Aorta (tissue), 5 donors: ENCODE measurements at regions of chr17 and their contacts with region 1.

Region 1: GRCh38 chr17:4420692-4421131 is 13.0 kb upstream of the SPNS3 start:
- DNase-seq: peak in 1 of 2 donors; percentile 64
- ATAC-seq: peak; percentile 84
- H3K4me3 ChIP-seq: no peak overlapping the region
- H3K27ac ChIP-seq: no peak overlapping the region
- H3K4me1 ChIP-seq: no peaks in the 10 kb centered on the region
- H3K27me3 ChIP-seq: no peaks in the 10 kb centered on the region

Region 2: DNA sequence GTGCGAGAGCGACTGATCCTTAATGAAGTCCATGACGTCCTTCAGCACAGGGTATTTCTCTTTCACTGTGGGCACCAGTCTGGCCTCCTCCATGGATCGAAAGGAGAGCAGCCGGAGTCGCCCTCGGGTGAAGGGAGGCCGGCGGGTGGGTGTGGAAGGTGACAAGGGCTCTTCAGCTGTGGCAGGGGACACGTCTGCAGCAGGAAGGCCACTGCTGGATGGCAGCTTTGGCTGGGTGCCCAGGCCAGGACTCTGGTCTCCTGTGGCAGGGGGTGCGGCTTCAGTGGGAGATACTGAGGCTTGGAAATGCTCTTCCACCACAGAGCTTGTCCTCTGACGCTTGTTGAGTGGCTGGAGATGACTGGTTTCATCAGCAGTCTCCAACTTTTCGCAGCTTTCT is 356.3 kb before region 1 on chr17:
- intact Hi-C with region 1: no loop called
- DNase-seq: no peak
- ATAC-seq: no peak
- H3K4me3 ChIP-seq: no peak overlapping the region
- H3K27ac ChIP-seq: no peak overlapping the region
- H3K4me1 ChIP-seq: no peaks in the 10 kb centered on the region
- H3K27me3 ChIP-seq: no peaks in the 10 kb centered on the region

Region 3: GRCh38 chr17:4541328-4542002 is 120.8 kb after region 1 on chr17:
- intact Hi-C with region 1: no loop called
- DNase-seq: peak in 1 of 2 donors; percentile 76
- ATAC-seq: no peak
- H3K4me3 ChIP-seq: no peak overlapping the region
- H3K27ac ChIP-seq: no peak overlapping the region
- H3K4me1 ChIP-seq: no peaks in the 10 kb centered on the region
- H3K27me3 ChIP-seq: no peaks in the 10 kb centered on the region

Region 4: GRCh38 chr17:4565209-4566141 is 144.8 kb after region 1 on chr17:
- intact Hi-C with region 1: loop called in 1 of 2 experiments (anchors 10 kb)
- DNase-seq: peak in 1 of 2 donors; percentile 74
- ATAC-seq: peak; percentile 89
- H3K4me3 ChIP-seq: no peak overlapping the region
- H3K27ac ChIP-seq: no peak overlapping the region
- H3K4me1 ChIP-seq: peaks cover 0 to 4% of the 10 kb centered on the region in 2 donors
- H3K27me3 ChIP-seq: no peaks in the 10 kb centered on the region

Region 5: DNA sequence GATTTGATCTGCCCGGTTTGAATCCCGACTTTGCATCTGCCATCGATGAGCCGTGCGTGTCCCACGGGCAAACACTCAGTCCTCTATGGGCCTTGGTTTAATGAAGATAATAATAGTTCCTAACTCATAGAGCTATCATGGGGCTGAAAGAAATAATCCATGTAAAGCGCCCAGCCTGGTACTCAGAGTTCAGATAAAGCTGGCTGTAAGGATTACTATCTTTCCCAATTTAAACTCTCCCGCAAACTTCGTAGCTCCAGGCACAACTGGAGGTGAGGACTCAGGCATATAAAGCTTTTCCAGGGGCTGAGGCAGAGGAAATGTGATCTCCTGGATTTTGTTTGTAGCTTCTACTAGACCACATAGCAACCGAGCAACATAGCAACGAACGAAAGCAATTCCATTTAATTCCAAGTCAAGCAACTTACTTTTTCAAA is 204.5 kb after region 1 on chr17:
- intact Hi-C with region 1: loop called (anchors 1 to 2 kb)
- DNase-seq: no peak
- ATAC-seq: no peak
- H3K4me3 ChIP-seq: no peak overlapping the region
- H3K27ac ChIP-seq: no peak overlapping the region
- H3K4me1 ChIP-seq: no peaks in the 10 kb centered on the region
- H3K27me3 ChIP-seq: no peaks in the 10 kb centered on the region